B cell (primary cell): ENCODE measurements at regions of chr5 and their contacts with region 1.

Region 1: GRCh38 chr5:84279234-84279633 is 105.4 kb downstream of the EDIL3 start:
- DNase-seq: no peak
- ATAC-seq: no peak
- H3K4me3 ChIP-seq: no peak overlapping the region
- H3K4me3 Mint-ChIP-seq: no peak overlapping the region
- H3K27ac ChIP-seq: no peak overlapping the region
- H3K27ac Mint-ChIP-seq: no peak overlapping the region
- H3K4me1 ChIP-seq: no peaks in the 10 kb centered on the region
- H3K4me1 Mint-ChIP-seq: no peaks in the 10 kb centered on the region
- H3K27me3 ChIP-seq: no peaks in the 10 kb centered on the region
- H3K27me3 Mint-ChIP-seq: no peaks in the 10 kb centered on the region
- CTCF ChIP-seq: no peak

Region 2: DNA sequence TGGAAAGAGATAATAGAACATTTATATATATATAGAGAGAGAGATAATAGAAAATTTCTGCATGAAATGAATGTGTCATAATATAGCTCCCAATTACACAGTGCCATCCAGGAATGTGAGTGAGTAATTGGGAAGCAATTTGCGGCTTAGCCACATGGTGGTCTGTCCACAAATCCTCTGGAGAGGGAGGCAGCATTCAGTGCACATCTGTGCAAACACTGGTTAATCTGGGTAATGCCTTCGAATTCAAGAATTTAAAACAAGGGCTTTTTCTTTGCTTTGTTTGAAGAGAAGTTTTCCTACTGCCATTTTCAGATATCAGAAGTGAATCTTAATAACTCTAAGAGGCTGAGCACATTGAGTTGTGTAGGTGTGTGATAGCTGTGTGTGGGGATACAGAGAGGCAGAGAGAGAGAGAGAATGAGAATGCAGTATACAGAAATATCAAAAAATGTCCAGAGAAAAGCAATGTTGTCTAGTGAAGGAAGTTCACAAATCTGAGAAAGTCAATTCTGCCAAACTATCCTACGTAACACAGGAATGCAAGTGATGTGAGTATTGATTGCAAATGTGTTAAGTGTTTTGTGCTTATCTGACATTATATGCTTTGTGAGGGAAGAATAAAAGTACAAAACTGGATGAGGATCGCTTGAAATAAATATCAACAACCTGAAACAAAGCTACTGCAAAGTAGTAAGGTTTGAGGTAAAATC is 29.2 kb before region 1 on chr5:
- CTCF ChIA-PET with region 1: no interaction called
- POLR2A ChIA-PET with region 1: no interaction called
- intact Hi-C with region 1: loop called (anchors 1 kb)
- DNase-seq: no peak
- ATAC-seq: no peak
- H3K4me3 ChIP-seq: no peak overlapping the region
- H3K4me3 Mint-ChIP-seq: no peak overlapping the region
- H3K27ac ChIP-seq: no peak overlapping the region
- H3K27ac Mint-ChIP-seq: no peak overlapping the region
- H3K4me1 ChIP-seq: no peaks in the 10 kb centered on the region
- H3K4me1 Mint-ChIP-seq: no peaks in the 10 kb centered on the region
- H3K27me3 ChIP-seq: no peaks in the 10 kb centered on the region
- H3K27me3 Mint-ChIP-seq: no peaks in the 10 kb centered on the region
- CTCF ChIP-seq: no peak